Sciatic nerve (tissue), 2 donors: ENCODE measurements at regions of chr9 and their contacts with region 1.

Region 1: DNA sequence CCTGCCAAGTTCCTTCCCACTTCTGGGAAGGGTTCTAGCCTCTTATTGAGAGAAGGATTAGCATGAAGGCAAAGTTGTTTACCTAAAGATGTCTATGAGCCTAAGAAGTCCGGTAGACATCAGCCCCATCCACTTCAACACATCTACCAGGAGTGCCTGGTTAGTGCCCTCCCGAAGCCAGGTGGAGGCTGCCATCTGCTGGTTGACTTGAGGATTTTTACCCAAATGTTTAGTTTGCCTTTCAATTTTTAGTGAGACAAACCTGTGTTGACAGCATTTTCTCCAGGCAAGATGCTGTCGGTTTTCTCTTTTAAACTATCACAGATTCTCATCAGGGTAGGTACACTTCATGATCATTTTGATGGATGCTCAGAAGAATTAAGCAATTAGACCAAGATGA is 83.6 kb upstream of the TNFSF8 start:
- DNase-seq: peak; percentile 84
- ATAC-seq: peak; percentile 80

Region 2: GRCh38 chr9:114662081-114662989 is 351.7 kb before region 1 on chr9:
- intact Hi-C with region 1: loop called (anchors 10 kb)
- DNase-seq: peak; percentile 63
- ATAC-seq: peak; percentile 73

Region 3: DNA sequence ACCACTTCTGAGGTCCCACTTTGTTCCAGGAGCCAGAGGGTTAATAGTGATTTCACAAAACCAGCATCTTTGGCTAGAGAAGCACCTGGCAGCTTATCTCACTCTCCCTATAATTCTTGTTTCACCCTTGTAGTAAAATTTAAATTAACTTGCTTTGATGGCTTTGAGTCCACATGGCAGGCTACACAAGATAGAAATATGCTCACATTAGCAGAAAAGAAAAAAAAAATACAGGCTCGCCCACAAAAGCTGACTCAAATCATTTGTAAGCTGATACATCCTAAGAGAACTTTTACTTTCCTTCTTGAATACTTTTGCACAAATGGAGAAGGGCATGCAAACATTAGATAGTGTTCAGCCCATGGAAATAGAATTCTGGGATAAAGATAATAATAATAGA is 244.4 kb before region 1 on chr9:
- intact Hi-C with region 1: no loop called
- DNase-seq: no peak
- ATAC-seq: no peak

Region 4: GRCh38 chr9:114906908-114907571 is 107.0 kb before region 1 on chr9:
- intact Hi-C with region 1: loop called (anchors 5 kb)
- DNase-seq: no peak
- ATAC-seq: peak; percentile 34

Region 5: GRCh38 chr9:114919611-114920010 is 94.4 kb before region 1 on chr9:
- intact Hi-C with region 1: no loop called
- DNase-seq: no peak
- ATAC-seq: peak; percentile 56

Region 6: GRCh38 chr9:114938687-114939575 is 75.1 kb before region 1 on chr9:
- intact Hi-C with region 1: no loop called
- DNase-seq: no peak
- ATAC-seq: peak; percentile 88